ENCODE measurements at regions of chrX and their contacts with region 1.

Region 1: GRCh38 chrX:78321809-78322208 is 5.6 kb downstream of the CYSLTR1 start:
- DNase-seq: peak; percentile 54
- ATAC-seq: peak; percentile 83
- H3K4me3 Mint-ChIP-seq: peak overlapping the region; percentile 9
- H3K27ac Mint-ChIP-seq: peak overlapping the region; percentile 72
- H3K4me1 Mint-ChIP-seq: peaks cover 39% of the 10 kb centered on the region
- H3K27me3 Mint-ChIP-seq: no peaks in the 10 kb centered on the region

Region 2: GRCh38 chrX:78129714-78130113 is 192.1 kb before region 1 on chrX:
- CTCF ChIA-PET with region 1: no interaction called
- POLR2A ChIA-PET with region 1: no interaction called
- intact Hi-C with region 1: loop called in 1 of 2 experiments (anchors 5 kb)
- DNase-seq: no peak
- ATAC-seq: peak; percentile 42
- H3K4me3 Mint-ChIP-seq: no peak overlapping the region
- H3K27ac Mint-ChIP-seq: peak overlapping the region; percentile 25
- H3K4me1 Mint-ChIP-seq: peaks cover 4% of the 10 kb centered on the region
- H3K27me3 Mint-ChIP-seq: no peaks in the 10 kb centered on the region